ENCODE measurements at regions of chr15 and their contacts with region 1.

Region 1: GRCh38 chr15:31326156-31326732 is 391 bp upstream of the KLF13 start:
- DNase-seq: peak; percentile 99
- ATAC-seq: peak; percentile 91

Region 2: DNA sequence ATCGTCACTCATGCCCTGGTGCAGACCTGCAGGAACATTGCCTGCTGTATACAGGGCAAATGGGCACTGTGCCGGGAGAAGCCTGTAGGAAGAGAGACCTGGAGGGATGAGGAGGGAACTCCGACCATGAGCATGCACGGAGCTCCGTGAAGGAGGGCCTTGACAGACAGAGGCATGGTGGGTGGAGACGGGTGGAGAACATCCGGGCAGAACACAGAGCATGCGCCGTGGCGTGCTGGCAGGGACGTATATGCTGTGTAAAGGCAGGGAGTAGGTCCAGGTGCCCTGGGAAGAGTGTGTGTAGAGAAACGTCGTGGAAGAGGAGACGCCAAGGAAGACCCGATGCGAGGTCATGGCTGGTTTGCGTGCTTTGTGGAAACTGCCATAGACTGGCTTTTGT is 555.5 kb before region 1 on chr15:
- intact Hi-C with region 1: no loop called
- DNase-seq: no peak
- ATAC-seq: no peak

Region 3: DNA sequence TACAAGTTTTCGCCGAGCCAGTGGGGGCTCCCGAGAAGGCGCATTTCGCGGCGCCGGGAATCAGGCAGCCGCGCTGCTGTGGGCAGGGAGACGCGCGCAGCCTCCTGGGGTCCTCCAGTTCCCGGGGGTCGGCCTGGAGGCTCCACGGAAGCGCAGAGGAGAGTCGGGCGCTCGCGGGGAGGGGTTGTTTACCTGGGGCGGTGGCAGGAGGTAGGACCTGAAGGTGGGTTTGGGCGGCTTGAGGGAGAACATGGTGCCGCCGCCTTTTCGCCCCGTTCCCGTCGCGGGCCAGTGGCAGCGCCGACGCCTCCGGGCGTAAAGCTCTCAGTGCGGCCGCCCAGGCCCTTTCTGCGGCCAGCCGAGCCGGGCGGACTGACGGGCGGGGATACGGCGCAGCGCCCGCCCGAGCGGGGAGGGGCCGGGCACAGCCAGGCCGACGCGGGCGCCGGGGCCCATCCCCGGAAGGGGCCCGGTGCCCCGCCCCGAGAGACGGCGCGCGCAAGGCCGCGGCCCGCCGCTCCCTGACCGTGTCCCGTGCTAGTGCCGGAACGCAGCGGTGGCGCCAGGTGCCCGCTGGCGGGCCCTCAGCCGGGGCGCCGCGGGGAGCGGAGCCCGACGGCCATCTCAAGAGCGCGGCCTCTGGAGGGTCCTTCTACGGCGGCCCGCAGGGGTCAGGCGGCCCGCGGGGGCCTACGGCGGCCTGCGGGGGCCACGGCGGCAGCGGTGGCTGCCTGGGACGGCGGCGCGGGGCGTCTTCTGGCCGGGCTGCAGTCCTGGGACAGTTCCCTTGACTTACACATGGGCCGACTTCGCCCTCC is 334.8 kb before region 1 on chr15 and contains the start of gene MTMR10:
- intact Hi-C with region 1: no loop called
- DNase-seq: peak; percentile 91
- ATAC-seq: peak; percentile 97
- total RNA-seq, gene MTMR10: 31.4 TPM

Region 4: GRCh38 chr15:31215490-31216214 is 110.6 kb before region 1 on chr15:
- intact Hi-C with region 1: loop called (anchors 1 kb)
- DNase-seq: peak; percentile 94
- ATAC-seq: peak; percentile 87

Region 5: DNA sequence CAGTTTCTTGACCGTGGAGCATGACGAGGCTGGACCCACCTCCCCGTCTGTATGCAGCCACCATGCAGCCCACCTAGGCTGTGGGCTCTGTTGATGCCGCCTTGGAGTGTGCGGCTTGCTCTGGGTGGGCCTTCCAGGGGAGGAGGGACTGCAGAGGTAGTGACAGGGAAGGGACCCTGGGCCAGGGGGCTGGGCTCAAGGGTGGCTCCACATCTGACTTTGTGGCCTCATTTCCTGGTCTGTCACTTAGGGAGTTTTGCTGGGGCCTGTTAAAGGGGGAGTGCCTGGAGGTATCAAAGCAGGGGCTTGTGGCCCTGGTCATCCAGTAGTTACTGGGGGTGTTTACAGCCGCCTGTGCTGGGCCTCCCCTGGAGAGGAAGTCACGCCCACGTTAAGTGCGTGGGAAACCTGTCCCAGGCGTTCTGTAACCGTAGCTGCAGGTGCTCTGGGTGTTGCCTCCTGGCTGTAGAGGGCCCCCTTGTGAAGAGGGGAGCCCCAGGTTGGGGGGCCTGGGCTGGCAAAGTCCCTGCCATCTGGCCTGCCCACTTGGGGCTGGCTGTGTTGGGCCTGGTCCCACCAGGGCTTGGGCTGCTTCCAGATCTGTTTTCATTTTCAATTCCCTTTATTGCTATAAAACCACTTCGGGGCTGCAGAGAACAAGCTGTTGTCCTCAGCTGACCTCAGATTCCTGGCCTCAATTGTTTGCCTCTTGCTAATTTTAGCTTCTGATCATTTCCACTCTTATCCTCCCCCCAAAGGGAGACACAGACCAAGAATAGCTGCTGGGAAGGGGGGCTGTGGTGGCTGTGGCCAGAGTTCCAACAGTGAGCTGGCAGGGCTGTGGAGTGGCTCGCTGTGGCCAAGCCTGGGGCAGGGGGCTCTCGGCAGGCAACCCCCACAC is 26.9 kb after region 1 on chr15:
- intact Hi-C with region 1: loop called (anchors 2 kb)
- DNase-seq: peak; percentile 81
- ATAC-seq: peak; percentile 82

Region 6: GRCh38 chr15:31396881-31397560 is 70.8 kb after region 1 on chr15:
- intact Hi-C with region 1: loop called (anchors 2 kb)
- DNase-seq: peak; percentile 97
- ATAC-seq: peak; percentile 92

Region 7: GRCh38 chr15:31488426-31489204 is 162.4 kb after region 1 on chr15:
- intact Hi-C with region 1: loop called (anchors 2 kb)
- DNase-seq: peak; percentile 77
- ATAC-seq: peak; percentile 71

Region 8: DNA sequence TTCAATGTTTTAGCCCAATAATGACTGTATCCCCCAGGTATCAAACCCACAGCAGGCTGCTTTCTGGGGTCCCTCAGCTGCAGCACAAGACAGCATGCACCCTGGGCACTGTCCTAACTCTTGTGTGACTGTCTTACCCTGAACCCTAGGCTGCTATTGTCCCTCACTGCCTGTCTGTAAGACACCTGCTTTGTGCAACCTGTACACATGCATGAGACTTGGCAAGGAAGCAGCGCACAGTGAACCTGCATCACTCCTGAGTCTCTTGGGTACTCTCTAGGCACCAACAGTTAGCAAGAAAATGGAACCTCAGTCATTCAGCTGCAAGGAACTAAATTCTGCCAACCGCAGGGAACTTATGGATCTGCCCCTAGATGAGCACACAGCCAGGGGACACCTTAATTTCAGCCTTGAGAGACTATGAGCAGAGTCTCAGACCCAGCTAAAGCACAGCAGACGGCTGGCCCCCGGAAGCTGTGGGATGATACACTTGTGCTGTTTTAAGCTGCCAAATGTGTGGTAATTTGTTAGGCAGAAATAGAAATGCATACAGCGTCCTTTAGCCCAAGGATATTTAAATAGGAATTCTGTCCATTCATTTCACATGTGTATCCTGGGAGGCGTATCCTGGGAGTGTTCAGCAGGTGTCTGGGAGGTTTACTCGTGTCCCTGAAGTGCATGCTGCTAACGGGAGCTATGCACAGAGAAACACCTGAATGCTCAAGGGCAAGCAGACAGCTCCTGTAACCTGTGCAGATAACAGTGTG is 224.2 kb after region 1 on chr15:
- intact Hi-C with region 1: no loop called
- DNase-seq: no peak
- ATAC-seq: no peak